GM12878 (cell line): ENCODE measurements at regions of chr11 and their contacts with region 1.

Region 1: GRCh38 chr11:82494988-82495432 is 238.7 kb downstream of the FAM181B start:
- DNase-seq: no peak
- ATAC-seq: peak; percentile 86
- H3K4me3 ChIP-seq: no peak overlapping the region
- H3K27ac ChIP-seq: no peak overlapping the region
- H3K4me1 ChIP-seq: no peaks in the 10 kb centered on the region
- H3K27me3 ChIP-seq: no peaks in the 10 kb centered on the region
- CTCF ChIP-seq: peak; percentile 32 to 53 (median 46); a peak in 5 of 6 replicates
- EP300 ChIP-seq: no peak
- POLR2A ChIP-seq: no peak
- RAD21 ChIP-seq: no peak

Region 2: DNA sequence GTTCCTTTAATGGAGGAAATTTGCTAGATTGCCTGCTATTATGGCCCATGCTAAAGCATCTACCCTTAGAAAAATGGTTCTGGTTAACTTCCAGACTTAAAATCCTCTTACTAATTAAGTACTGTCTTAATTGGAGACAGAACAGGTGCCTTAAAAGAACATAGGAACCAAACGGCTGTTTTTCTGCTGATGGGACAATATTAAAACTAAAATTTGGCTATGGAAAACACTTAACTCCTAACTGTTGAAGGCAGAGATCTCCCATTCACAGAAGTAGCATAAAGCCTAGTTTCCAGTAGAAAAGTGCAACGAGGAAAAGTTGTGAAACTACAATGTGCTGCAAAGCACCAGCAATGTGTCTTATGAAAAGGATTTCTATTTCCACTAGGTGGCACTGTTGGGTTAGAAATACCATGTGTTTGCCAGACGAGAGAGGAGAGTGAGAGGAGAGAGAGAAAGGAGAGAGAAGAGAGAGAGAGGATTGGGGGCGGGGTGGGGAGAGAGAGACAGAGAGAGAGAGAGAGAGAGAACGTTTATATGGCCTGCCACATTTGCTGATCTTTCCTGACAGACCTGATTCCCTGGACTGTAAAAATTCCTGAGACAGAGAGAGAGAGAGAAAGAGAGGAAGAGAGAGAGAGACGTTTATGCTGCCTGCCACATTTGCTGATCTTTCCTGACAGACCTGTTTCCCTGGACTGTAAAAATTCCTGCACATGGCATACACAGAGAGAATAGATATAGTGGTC is 187.2 kb after region 1 on chr11:
- CTCF ChIA-PET with region 1: interaction called, 4 read pairs
- POLR2A ChIA-PET with region 1: no interaction called
- RAD21 ChIA-PET with region 1: no interaction called
- SMC1A ChIA-PET with region 1: no interaction called
- in situ Hi-C with region 1: no loop called
- intact Hi-C with region 1: loop called (anchors 5 kb)
- DNase-seq: peak; percentile 9
- ATAC-seq: peak; percentile 95
- H3K4me3 ChIP-seq: no peak overlapping the region
- H3K27ac ChIP-seq: no peak overlapping the region
- H3K4me1 ChIP-seq: no peaks in the 10 kb centered on the region
- H3K27me3 ChIP-seq: no peaks in the 10 kb centered on the region; a peak in 1 of 4 replicates
- CTCF ChIP-seq: peak; percentile 42 to 67 (median 58); a peak in 5 of 6 replicates
- EP300 ChIP-seq: no peak
- POLR2A ChIP-seq: no peak
- RAD21 ChIP-seq: peak; percentile 73